ENCODE measurements at regions of chr12 and their contacts with region 1.

Region 1: GRCh38 chr12:5988659-5989116 is 43.6 kb upstream of the ANO2 start:
- H3K4me3 ChIP-seq: no peak overlapping the region
- H3K27ac ChIP-seq: no peak overlapping the region
- H3K4me1 ChIP-seq: no peaks in the 10 kb centered on the region
- CTCF ChIP-seq: peak; percentile 91

Region 2: GRCh38 chr12:5900533-5901205 is 88.0 kb before region 1 on chr12:
- CTCF ChIA-PET with region 1: no interaction called
- POLR2A ChIA-PET with region 1: no interaction called
- H3K4me3 ChIP-seq: no peak overlapping the region
- H3K27ac ChIP-seq: no peak overlapping the region
- H3K4me1 ChIP-seq: no peaks in the 10 kb centered on the region
- CTCF ChIP-seq: no peak

Region 3: DNA sequence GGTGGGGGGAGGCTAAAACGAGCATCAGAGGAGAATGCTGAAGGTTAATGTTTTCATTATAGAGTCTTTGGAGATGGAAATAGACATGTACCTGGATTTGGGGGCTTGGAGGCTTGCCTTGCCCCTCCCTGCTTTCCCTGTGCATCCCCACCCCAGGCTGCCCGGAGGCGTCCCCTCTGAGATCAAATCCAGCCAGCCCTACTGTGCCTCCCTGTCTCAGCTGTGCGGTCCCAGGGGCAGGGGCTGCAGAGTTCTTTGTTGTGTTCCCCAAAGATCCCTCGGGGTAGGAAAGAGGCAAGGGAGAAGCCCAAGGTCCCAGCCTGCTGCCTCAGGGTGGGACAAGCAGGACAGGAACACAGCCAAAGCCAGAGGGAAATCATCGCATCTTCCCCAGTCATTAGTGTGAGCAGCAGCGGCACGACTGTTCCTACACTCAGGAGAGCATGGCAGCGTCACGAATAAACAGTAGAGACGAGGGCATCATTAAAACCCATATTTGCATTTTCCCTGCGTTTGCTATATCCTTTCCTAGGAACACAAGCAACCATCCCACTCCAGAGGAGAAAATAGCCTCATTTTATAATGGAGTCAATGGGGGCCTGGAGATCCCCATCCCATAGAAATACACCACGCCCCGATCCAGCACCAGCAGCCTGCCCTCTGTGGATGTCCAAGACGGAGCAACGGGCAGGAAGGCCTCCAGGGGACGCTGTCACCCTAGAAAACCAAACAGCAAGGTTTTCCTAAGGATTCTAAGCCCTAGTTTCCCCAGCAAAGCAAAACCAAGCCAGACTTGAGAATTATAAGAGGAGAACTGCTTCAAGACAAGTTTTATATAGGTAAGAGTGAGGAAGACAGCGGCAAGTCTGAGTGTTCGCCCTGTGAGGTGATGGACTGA is 76.0 kb before region 1 on chr12:
- CTCF ChIA-PET with region 1: interaction called, 12 read pairs
- POLR2A ChIA-PET with region 1: no interaction called
- H3K4me3 ChIP-seq: no peak overlapping the region
- H3K27ac ChIP-seq: no peak overlapping the region
- H3K4me1 ChIP-seq: no peaks in the 10 kb centered on the region
- CTCF ChIP-seq: no peak

Region 4: DNA sequence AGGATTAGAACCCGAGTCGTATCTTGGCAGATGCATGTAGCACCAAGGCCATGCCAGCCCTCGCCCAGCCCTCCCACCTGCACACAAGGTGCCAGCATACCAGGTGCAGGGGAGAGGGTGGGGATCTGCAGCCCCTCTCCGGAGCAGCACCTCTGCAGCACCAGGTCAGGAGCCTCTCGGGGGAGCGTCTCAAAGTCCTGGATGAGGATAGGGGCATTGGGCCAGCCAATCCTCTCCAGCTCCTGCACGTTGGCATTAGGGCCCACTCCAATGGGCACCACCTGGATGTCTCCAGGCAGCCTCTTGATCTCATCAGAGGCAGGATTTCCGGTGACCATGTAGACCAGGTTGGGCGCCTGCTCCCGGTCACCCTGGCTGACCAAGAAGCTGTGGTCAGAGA is 29.6 kb after region 1 on chr12:
- CTCF ChIA-PET with region 1: interaction called, 14 read pairs
- POLR2A ChIA-PET with region 1: no interaction called
- H3K4me3 ChIP-seq: no peak overlapping the region
- H3K27ac ChIP-seq: no peak overlapping the region
- H3K4me1 ChIP-seq: no peaks in the 10 kb centered on the region
- CTCF ChIP-seq: no peak

Region 5: DNA sequence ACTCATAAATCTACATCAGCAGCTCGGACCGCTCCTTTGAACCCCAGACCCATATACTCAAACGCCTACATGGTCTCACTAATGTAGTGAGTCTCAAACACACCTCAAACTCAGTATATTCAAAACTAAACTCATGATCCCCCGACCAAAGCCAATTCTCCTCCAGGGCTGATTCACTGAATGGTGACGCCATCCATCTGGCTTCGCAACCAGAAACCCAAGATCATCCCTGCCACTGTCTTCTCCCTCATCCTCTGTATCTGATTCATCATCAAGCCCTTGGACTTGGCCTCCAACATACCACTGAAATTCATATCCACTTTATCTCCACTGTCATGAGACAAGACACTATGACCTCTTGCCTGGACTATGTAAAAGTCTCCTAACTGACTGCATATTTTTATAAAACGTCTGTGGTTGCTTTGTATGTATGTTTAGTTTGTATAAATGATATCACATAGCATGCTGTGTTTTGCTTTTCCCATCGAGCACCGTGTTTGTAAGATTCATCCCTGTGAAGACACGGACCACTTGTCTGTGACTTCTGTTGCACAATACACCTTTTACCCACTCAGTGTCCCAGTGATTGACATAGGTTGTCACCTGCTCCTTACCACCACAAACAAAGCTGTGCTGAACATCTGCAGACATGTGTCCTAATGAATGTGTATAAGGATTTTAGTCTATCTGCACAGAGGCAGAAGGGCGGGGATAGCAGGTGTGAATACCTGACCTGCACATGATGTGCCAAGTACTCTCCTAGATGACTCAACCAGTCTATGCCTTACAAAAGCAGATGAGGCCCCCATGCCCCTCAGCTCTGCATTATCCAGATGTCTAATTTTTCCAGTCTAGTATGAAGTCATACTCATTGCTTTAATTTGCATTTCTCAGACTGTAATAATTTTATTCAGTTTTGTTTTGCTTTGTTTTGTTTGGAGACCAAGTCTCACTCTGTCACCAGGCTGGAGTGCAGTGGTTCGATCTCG is 58.9 kb after region 1 on chr12:
- CTCF ChIA-PET with region 1: interaction called, 45 read pairs
- POLR2A ChIA-PET with region 1: no interaction called
- H3K4me3 ChIP-seq: no peak overlapping the region
- H3K27ac ChIP-seq: no peak overlapping the region
- H3K4me1 ChIP-seq: no peaks in the 10 kb centered on the region
- CTCF ChIP-seq: no peak

Region 6: DNA sequence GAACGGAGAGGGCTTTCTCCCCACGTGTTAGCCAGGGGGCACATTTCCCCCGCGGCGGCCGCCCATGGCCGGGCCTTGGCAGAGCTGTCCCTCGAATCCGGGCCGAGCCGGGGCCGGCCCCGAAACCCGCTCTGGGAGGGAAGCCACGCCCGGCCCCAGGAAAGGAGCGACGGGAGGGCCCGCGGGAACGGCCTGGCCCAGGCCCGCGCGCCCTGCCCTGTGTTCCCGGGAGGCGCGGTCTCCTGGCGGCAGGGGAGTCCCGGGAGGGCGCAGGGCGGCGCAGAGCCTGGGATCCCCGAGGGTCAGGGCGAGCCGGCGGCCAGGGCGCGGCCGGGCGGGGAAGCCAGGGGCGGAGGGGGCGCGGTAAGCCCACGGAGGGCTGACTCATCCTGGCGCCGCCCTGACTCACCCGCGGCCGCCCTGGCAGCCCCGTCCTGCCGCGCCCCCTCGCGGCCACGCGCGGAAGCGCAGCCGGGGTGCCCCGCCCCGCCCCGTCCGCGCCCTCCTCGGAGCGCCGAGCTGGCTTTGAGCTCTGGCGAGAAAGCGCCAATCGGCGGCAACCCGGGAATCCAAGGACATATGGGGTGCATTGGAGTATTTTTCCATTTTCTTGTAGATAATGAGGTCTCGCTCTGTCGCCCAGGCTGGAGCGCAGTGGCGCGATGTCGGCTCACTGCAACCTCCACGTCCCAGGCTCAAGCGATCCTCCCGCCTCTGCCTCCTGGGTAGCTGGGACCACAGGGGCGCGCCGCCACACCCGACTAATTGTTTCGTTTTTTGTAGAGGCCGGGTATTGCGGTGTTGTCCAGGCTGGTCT is 290.0 kb after region 1 on chr12:
- CTCF ChIA-PET with region 1: interaction called, 82 read pairs
- POLR2A ChIA-PET with region 1: no interaction called
- H3K4me3 ChIP-seq: peak overlapping the region; percentile 41
- H3K27ac ChIP-seq: peak overlapping the region; percentile 81
- H3K4me1 ChIP-seq: peaks cover 7% of the 10 kb centered on the region; the same call in 1 of the 2 replicates
- CTCF ChIP-seq: no peak

Region 7: DNA sequence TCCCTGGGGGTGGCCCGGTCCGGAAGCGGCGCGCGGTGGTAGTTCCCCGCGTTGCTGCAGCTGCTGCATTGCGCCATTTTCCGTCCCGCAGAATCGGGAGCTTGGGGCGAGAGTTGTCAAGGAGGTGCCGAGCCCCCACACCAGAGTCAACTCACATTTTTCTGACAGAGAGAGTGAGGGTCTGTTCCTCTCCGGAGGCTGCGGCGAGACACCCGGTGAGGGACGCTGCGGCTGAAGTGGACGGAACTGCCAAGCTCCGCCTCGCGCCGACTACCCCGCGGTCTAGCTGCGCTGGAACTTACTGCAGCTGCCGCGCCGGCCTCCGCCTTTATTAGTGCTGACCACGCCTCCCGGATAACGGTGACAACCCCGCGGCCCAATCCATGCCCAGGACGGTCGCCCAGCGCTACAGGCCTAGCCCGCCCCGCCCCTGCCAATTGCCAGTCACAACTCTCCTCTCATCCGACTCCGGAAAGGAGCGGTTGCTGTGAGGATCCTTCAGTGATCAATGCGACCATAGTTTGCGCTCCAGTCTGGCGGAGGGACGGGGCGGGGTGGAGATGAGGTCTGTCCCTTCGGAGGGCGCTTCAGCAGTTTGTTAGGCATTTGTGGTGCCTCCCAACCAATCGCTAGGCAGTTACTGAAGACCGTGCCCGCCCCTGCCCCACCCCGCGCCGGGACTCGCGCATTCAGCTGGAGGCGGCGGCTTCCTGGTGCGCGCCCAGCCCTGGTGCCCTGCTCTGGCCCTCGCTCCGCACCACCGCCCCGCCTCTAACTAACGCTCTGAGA is 481.9 kb after region 1 on chr12 and contains the start of gene VAMP1:
- CTCF ChIA-PET with region 1: interaction called, 10 read pairs
- POLR2A ChIA-PET with region 1: no interaction called
- H3K4me3 ChIP-seq: peak within 1 kb of the TSS; percentile 81
- H3K27ac ChIP-seq: peak within 1 kb of the TSS; percentile 35
- H3K4me1 ChIP-seq: peaks cover 2% of the 10 kb centered on the region; the same call in 1 of the 2 replicates
- CTCF ChIP-seq: peak; percentile 42